T-cell (primary cell): ENCODE measurements at regions of chr18 and their contacts with region 1.

Region 1: DNA sequence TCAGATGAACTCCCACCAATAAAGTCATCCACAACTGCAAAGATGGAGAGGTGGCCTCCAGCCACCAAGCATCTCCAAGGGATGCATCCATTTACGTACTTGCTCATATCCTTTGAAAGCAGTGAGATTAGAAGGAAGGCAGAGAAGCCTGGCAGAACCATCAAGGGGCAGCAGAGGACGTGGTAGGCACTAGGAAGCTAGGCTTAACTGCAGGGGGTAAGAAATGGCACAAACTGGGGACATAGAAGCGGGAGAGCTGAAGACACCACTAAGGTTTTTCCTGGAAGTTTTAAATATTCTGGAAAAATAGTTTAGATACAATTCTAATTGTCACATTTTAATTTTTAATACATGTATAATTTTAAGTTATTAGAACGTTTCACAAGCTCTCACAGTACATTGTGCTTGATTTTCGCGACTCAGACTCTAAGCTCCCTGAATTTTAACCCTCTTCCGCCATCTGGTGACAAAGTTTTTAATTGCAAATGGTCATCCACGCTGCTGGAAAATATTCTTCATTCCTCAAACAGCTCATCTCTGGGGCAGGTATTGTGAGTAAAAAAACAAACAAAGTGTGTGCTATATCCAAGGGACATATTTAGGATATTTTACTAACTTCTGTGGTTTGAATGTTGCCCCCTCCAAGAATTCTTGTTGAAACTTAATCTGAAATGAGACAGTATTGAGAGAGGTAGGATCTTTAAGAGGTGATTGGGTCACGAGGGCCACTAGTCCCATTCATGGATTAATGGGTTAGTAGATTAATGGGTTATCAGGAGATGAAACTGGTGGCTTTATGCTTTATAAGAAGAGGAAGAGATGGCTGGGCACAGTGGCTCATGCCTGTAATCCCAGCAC is 1.6 kb upstream of the PSTPIP2 start:
- DNase-seq: peak in 26 of 35 experiments; percentile 9 to 83 (median 41)
- ATAC-seq: peak; percentile 36 to 66 (median 51)
- H3K4me3 ChIP-seq: no peak overlapping the region
- H3K4me3 Mint-ChIP-seq: peak overlapping the region in 2 of 3 donors; percentile 83 to 84
- H3K27ac ChIP-seq: no peak overlapping the region
- H3K27ac Mint-ChIP-seq: peak overlapping the region in 1 of 2 donors; percentile 53
- H3K4me1 ChIP-seq: peaks cover 5 to 41% of the 10 kb centered on the region in 2 experiments
- H3K4me1 Mint-ChIP-seq: peaks cover 37 to 45% (median 42%) of the 10 kb centered on the region in 3 donors
- H3K27me3 ChIP-seq: peaks cover 0 to 12% of the 10 kb centered on the region in 2 experiments
- H3K27me3 Mint-ChIP-seq: no peaks in the 10 kb centered on the region

Region 2: DNA sequence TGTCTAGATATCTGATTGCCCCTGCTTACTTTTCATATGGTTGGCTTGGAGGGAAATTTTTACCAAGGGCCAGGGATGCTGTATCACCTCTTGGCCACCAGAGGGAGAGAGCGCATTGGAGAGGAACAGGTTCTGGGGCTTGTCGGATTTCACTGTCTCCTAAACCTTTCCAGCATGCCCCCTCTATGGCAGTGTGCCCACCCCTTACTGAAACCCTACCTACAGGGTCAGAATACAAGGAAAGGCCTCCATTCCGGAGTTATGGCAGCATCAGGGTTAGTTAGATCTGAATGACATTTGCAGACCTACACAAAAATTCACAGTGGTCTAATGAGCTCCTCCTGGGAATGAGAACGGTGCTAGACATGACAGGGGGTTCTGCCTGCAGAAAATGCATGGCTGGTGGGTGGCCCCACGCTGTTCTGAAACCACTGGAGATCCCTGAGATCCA is 452.6 kb before region 1 on chr18:
- CTCF ChIA-PET with region 1: interaction called in 1 of 2 experiments, 10 read pairs
- POLR2A ChIA-PET with region 1: no interaction called
- DNase-seq: peak in 32 of 35 experiments; percentile 2 to 63 (median 22)
- ATAC-seq: peak; percentile 48 to 76 (median 58)
- H3K4me3 ChIP-seq: no peak overlapping the region
- H3K4me3 Mint-ChIP-seq: no peak overlapping the region
- H3K27ac ChIP-seq: no peak overlapping the region
- H3K27ac Mint-ChIP-seq: no peak overlapping the region
- H3K4me1 ChIP-seq: no peaks in the 10 kb centered on the region
- H3K4me1 Mint-ChIP-seq: no peaks in the 10 kb centered on the region
- H3K27me3 ChIP-seq: peaks cover 0 to 6% of the 10 kb centered on the region in 2 experiments
- H3K27me3 Mint-ChIP-seq: peaks cover 4 to 22% of the 10 kb centered on the region in 2 donors

Region 3: GRCh38 chr18:45802608-45803492 is 270.9 kb before region 1 on chr18:
- CTCF ChIA-PET with region 1: no interaction called
- POLR2A ChIA-PET with region 1: no interaction called
- DNase-seq: no peak
- ATAC-seq: no peak
- H3K4me3 ChIP-seq: no peak overlapping the region
- H3K4me3 Mint-ChIP-seq: no peak overlapping the region
- H3K27ac ChIP-seq: no peak overlapping the region
- H3K27ac Mint-ChIP-seq: no peak overlapping the region
- H3K4me1 ChIP-seq: no peaks in the 10 kb centered on the region
- H3K4me1 Mint-ChIP-seq: no peaks in the 10 kb centered on the region
- H3K27me3 ChIP-seq: peaks cover 0 to 7% of the 10 kb centered on the region in 2 experiments
- H3K27me3 Mint-ChIP-seq: peaks cover 9 to 11% of the 10 kb centered on the region in 2 donors

Region 4: DNA sequence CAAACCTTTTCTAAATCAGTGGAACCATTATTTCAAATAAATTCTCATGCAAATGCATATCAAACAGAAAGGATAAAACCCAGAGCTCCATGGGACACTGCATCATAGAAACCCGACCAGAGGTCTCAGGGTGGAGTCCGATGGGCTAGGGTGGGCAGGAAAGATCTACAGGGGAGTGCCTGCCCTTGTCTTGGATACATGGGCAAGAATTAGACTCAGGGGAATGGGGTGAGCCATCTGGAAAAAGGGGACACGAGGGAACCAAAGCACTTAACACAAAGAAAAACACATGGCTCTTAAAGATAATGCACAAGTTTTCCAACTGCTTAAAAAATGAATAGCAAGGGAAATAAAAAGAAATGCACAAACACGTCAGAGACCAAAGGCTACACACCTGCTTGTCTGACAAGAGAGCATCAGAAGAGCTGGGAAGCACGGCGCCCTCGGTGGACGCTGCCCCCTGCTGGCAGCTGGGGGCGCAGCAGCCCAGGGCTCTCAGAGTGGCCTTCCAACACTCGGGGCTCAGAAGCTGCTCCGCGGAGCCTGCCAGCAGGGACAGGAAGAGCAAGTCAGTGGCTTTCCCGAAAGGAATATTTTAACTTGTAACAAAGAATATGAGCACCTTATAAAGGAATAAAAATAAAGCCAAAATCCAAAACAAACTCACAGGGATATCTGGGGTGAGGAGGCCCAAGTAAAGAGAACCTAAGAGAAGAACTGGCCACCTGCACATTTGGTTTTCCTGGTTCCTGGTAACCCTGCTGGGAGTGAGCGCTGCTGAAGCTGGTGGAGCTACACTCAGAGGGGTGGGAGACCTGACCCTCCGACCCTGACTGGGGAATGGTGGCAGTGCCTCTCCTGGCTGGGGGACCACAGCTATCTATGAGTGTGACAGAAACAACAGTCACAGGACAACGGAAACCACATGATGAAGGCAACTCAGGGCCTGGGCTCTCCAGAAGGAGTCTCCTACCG is 193.7 kb before region 1 on chr18:
- CTCF ChIA-PET with region 1: interaction called, 3 to 12 read pairs
- POLR2A ChIA-PET with region 1: no interaction called
- DNase-seq: peak; percentile 26 to 81 (median 64)
- ATAC-seq: peak; percentile 92 to 96 (median 94)
- H3K4me3 ChIP-seq: no peak overlapping the region
- H3K4me3 Mint-ChIP-seq: no peak overlapping the region
- H3K27ac ChIP-seq: no peak overlapping the region
- H3K27ac Mint-ChIP-seq: peak overlapping the region in 1 of 2 donors; percentile 34
- H3K4me1 ChIP-seq: peaks cover 5 to 10% of the 10 kb centered on the region in 2 experiments
- H3K4me1 Mint-ChIP-seq: peaks cover 14 to 17% (median 16%) of the 10 kb centered on the region in 3 donors
- H3K27me3 ChIP-seq: no peaks in the 10 kb centered on the region
- H3K27me3 Mint-ChIP-seq: no peaks in the 10 kb centered on the region

Region 5: GRCh38 chr18:45920367-45920766 is 153.3 kb before region 1 on chr18:
- CTCF ChIA-PET with region 1: interaction called, 3 to 10 read pairs
- POLR2A ChIA-PET with region 1: interaction called in 1 of 2 experiments, 3 read pairs
- DNase-seq: peak in 3 of 35 experiments; percentile 5 to 18 (median 8)
- ATAC-seq: peak in 1 of 4 experiments; percentile 32
- H3K4me3 ChIP-seq: no peak overlapping the region
- H3K4me3 Mint-ChIP-seq: no peak overlapping the region
- H3K27ac ChIP-seq: no peak overlapping the region
- H3K27ac Mint-ChIP-seq: no peak overlapping the region
- H3K4me1 ChIP-seq: peaks cover 0 to 3% of the 10 kb centered on the region in 2 experiments
- H3K4me1 Mint-ChIP-seq: peaks cover 14 to 21% (median 15%) of the 10 kb centered on the region in 3 donors
- H3K27me3 ChIP-seq: no peaks in the 10 kb centered on the region
- H3K27me3 Mint-ChIP-seq: no peaks in the 10 kb centered on the region

Region 6: DNA sequence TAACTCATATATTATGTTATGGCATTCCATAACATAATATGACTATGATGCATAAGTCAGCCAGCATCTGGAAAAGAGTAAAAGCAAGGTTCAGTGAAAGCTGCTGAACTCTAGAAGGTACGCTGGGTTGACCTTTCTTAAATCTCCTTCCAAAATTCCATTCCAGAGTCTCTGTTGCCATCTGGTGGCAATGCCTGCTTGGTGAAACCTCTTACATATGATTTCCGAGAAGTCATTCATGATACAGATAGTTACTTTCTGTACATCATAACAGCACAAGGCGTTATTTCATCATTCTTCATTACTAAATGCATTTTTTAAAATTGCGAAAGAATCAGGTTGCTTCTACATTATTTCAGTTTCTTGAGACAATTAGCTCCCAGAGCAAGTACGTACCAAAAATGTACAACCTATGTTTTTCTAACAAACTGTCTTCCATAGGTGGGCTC is 99.6 kb before region 1 on chr18:
- CTCF ChIA-PET with region 1: interaction called, 5 to 13 read pairs
- POLR2A ChIA-PET with region 1: no interaction called
- DNase-seq: peak; percentile 12 to 81 (median 57)
- ATAC-seq: peak; percentile 75 to 80 (median 78)
- H3K4me3 ChIP-seq: no peak overlapping the region
- H3K4me3 Mint-ChIP-seq: no peak overlapping the region
- H3K27ac ChIP-seq: no peak overlapping the region
- H3K27ac Mint-ChIP-seq: peak overlapping the region; percentile 16 to 84
- H3K4me1 ChIP-seq: peaks cover 3 to 4% of the 10 kb centered on the region in 2 experiments
- H3K4me1 Mint-ChIP-seq: peaks cover 0 to 9% (median 6%) of the 10 kb centered on the region in 3 donors
- H3K27me3 ChIP-seq: no peaks in the 10 kb centered on the region
- H3K27me3 Mint-ChIP-seq: no peaks in the 10 kb centered on the region

Region 7: GRCh38 chr18:46097801-46098615 is 24.3 kb after region 1 on chr18 and contains the start of gene ATP5F1A:
- CTCF ChIA-PET with region 1: interaction called, 3 to 11 read pairs
- POLR2A ChIA-PET with region 1: interaction called in 1 of 2 experiments, 3 read pairs
- DNase-seq: peak; percentile 66 to 91 (median 81)
- ATAC-seq: peak; percentile 88 to 92 (median 90)
- H3K4me3 ChIP-seq: peak within 1 kb of the TSS; percentile 95 to 97
- H3K4me3 Mint-ChIP-seq: peak within 1 kb of the TSS; percentile 97 to 98 (median 98)
- H3K27ac ChIP-seq: peak within 1 kb of the TSS; percentile 90
- H3K27ac Mint-ChIP-seq: peak within 1 kb of the TSS; percentile 93 to 98
- H3K4me1 ChIP-seq: peaks cover 7 to 34% of the 10 kb centered on the region in 2 experiments
- H3K4me1 Mint-ChIP-seq: peaks cover 35 to 39% (median 36%) of the 10 kb centered on the region in 3 donors
- H3K27me3 ChIP-seq: no peaks in the 10 kb centered on the region
- H3K27me3 Mint-ChIP-seq: no peaks in the 10 kb centered on the region
- total RNA-seq, gene ATP5F1A: 180 to 264 (median 238) TPM